AG04449 (cell line): ENCODE measurements at regions of chr10 and their contacts with region 1.

Region 1: GRCh38 chr10:58414270-58415041 is 29.2 kb downstream of the TFAM start:
- DNase-seq: no peak
- H3K4me3 ChIP-seq: no peak overlapping the region
- CTCF ChIP-seq: peak; percentile 20

Region 2: GRCh38 chr10:58518775-58519174 is 104.3 kb after region 1 on chr10:
- CTCF ChIA-PET with region 1: interaction called, 25 read pairs
- POLR2A ChIA-PET with region 1: no interaction called
- DNase-seq: no peak
- H3K4me3 ChIP-seq: no peak overlapping the region
- CTCF ChIP-seq: no peak

Region 3: GRCh38 chr10:58641095-58641531 is 226.7 kb after region 1 on chr10:
- CTCF ChIA-PET with region 1: interaction called, 12 read pairs
- POLR2A ChIA-PET with region 1: no interaction called
- DNase-seq: peak; percentile 89
- H3K4me3 ChIP-seq: no peak overlapping the region
- CTCF ChIP-seq: peak; percentile 9

Region 4: GRCh38 chr10:58775960-58776567 is 361.6 kb after region 1 on chr10:
- CTCF ChIA-PET with region 1: interaction called, 12 read pairs
- POLR2A ChIA-PET with region 1: no interaction called
- DNase-seq: no peak
- H3K4me3 ChIP-seq: no peak overlapping the region
- CTCF ChIP-seq: no peak